Activated B cell treated with CpG ODN at 0.5 μM for 24 hours (primary cell): ENCODE measurements at regions of chr19 and their contacts with region 1.

Region 1: GRCh38 chr19:23914402-23915301 is at the start of gene ZNF726:
- DNase-seq: peak; percentile 67
- ATAC-seq: peak; percentile 97
- H3K4me3 Mint-ChIP-seq: peak within 1 kb of the TSS; percentile 96
- H3K27ac Mint-ChIP-seq: peak within 1 kb of the TSS; percentile 83
- H3K4me1 Mint-ChIP-seq: peaks cover 10% of the 10 kb centered on the region
- H3K27me3 Mint-ChIP-seq: no peaks in the 10 kb centered on the region
- CTCF ChIP-seq: no peak
- total RNA-seq, gene ZNF726: 8.2 and 9.4 TPM in 2 replicates

Region 2: DNA sequence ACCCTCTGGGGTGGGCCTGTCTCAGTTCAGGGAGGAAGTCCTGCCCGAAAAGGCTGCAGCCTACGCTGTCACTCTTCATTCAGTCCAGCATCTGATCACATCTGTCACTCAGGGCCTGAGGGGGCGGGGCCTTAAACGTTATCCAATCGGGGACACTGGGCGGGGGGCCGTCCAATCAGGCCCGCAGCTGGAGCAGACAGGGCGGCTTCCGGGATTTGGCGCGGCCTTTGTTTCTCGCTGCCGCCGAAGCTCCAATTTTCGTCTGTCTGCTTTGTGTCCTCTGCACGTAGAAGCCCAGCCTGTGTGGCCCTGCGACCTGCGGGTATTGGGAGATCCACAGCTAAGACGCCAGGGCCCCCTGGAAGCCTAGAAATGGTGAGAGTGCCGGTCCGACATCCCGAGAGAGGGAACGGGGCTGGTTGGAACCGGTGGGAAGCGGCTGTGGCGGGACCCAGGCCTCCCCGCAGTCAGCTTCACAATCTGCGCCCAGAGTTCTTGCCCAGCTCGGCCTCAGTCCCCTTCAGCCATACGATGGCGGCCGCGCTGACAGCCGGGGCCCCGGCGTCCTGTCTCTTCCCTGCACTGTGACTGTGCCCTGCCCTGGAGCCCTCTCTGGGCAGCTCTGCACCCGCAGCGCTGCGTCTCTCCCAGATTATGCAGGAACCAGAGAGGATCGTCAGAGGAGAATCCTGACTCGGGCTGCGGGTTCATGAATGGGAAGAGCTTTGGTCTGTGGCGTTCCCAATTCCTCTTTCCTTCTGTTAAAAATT is 797.7 kb before region 1 on chr19 and contains the start of gene ZNF730:
- CTCF ChIA-PET with region 1: no interaction called
- POLR2A ChIA-PET with region 1: no interaction called
- intact Hi-C with region 1: loop called (anchors 2 kb)
- DNase-seq: peak; percentile 55
- ATAC-seq: peak; percentile 99
- H3K4me3 Mint-ChIP-seq: peak within 1 kb of the TSS; percentile 91
- H3K27ac Mint-ChIP-seq: peak within 1 kb of the TSS; percentile 24
- H3K4me1 Mint-ChIP-seq: peaks cover 11% of the 10 kb centered on the region
- H3K27me3 Mint-ChIP-seq: no peaks in the 10 kb centered on the region
- CTCF ChIP-seq: no peak
- total RNA-seq, gene ZNF730: 1.3 and 1.5 TPM in 2 replicates